HCT116 (cell line): ENCODE measurements at regions of chr1 and their contacts with region 1.

Region 1: DNA sequence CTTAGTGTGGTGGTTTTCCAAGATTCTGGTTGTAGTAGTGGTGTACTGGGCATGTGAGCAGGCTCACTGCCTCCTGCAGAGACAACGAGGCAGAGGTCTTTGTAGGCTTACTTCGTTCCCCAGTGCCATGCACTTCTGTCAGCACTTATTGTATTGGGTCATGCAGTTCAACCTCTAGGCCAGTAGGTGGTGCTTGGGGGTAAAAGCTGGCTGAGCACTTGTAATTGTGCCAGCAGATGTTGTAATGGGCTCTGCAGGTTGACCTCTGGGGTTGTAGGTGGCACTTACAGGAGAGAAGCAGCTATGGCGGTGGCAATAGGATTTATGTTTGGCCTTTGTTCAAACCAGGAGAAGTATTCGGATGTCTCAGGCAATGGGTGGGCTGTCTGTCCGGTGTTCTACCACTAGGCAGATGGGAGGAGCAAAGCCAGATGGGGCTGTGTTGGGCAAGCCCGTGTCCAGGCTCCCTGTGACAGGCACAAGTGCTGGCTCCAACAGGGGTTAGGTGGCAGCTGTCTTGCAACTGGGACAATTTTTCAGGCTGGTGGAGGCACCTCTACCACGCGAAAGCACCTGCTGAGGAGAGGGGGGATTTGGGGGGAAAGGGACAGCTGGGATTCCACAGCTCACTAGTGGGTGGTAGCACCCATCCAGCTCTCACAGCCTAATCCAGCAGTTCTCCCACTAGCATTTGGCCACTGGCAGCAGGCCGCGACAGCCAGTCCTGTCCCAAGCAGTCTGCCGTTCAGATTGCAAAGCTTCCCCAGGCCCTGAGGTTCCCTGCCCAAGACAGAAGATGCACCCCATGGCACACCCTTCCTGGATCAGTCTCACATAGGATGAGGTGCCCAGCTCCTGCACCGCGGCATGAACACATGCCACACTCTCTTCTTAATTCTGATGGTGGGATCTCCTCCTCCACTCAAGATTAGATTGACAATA is 274.5 kb downstream of the CTH start:
- DNase-seq: peak; percentile 41
- ATAC-seq: peak; percentile 87
- H3K4me3 ChIP-seq: no peak overlapping the region
- H3K27ac ChIP-seq: no peak overlapping the region
- H3K4me1 ChIP-seq: no peaks in the 10 kb centered on the region
- H3K27me3 ChIP-seq: peaks cover 23% of the 10 kb centered on the region
- CTCF ChIP-seq: peak; percentile 20 to 84 (median 81); a peak in 5 of 6 replicates
- POLR2A ChIP-seq: no peak
- RAD21 ChIP-seq: peak; percentile 58

Region 2: GRCh38 chr1:70034403-70034802 is 651.2 kb before region 1 on chr1:
- CTCF ChIA-PET with region 1: no interaction called
- POLR2A ChIA-PET with region 1: no interaction called
- RAD21 ChIA-PET with region 1: no interaction called
- intact Hi-C with region 1: loop called (anchors 10 kb)
- DNase-seq: peak; percentile 29
- ATAC-seq: peak; percentile 78
- H3K4me3 ChIP-seq: no peak overlapping the region
- H3K27ac ChIP-seq: no peak overlapping the region
- H3K4me1 ChIP-seq: no peaks in the 10 kb centered on the region; a peak in 1 of 4 replicates
- H3K27me3 ChIP-seq: peaks cover 15% of the 10 kb centered on the region; the same call in 1 of the 2 replicates
- CTCF ChIP-seq: peak; percentile 39 to 50 (median 42); a peak in 5 of 6 replicates
- POLR2A ChIP-seq: no peak
- RAD21 ChIP-seq: peak; percentile 71

Region 3: GRCh38 chr1:70440642-70441378 is 244.8 kb before region 1 on chr1:
- CTCF ChIA-PET with region 1: no interaction called
- POLR2A ChIA-PET with region 1: no interaction called
- RAD21 ChIA-PET with region 1: no interaction called
- intact Hi-C with region 1: no loop called
- DNase-seq: no peak
- ATAC-seq: no peak
- H3K4me3 ChIP-seq: no peak overlapping the region
- H3K27ac ChIP-seq: no peak overlapping the region
- H3K4me1 ChIP-seq: peaks cover 0 to 6% of the 10 kb centered on the region in 2 experiments; a peak in 1 of 4 replicates
- H3K27me3 ChIP-seq: no peaks in the 10 kb centered on the region
- CTCF ChIP-seq: no peak
- POLR2A ChIP-seq: no peak
- RAD21 ChIP-seq: no peak